SK-N-SH (cell line): ENCODE measurements at regions of chr6 and their contacts with region 1.

Region 1: DNA sequence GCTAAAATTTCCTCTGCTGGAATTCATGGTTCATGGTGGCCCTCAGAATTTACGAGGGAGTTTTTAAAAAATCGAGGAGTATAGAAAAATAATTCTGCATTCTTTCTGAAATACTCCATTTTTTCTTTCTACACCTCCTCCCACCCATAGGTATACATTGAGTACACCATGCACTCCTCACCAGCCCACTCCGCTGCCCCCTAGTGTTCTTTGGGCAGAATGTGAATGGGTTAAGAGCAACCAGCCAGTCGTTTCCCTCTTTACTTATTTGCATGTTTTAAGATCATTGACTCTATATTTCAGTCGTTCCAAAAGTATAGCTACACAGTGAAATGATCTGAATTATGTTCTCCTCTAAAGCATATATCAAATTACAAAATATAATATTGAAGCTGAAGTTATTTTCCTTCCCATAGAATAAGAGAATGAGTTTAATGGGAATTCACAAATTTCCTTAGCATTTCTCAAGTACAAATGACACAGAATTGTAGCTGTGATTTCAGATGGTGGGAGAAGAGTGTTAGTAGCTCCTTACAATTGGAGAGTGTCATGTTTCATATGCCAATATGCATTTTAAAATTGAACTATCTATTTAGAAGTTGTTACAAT is 977.7 kb upstream of the SLC35B3 start:
- DNase-seq: peak; percentile 35
- H3K4me3 ChIP-seq: no peak overlapping the region
- H3K27ac ChIP-seq: no peak overlapping the region
- H3K4me1 ChIP-seq: no peaks in the 10 kb centered on the region
- H3K27me3 ChIP-seq: no peaks in the 10 kb centered on the region
- CTCF ChIP-seq: peak; percentile 57
- EP300 ChIP-seq: no peak
- RAD21 ChIP-seq: peak; percentile 60

Region 2: GRCh38 chr6:9197726-9198125 is 215.3 kb before region 1 on chr6:
- CTCF ChIA-PET with region 1: no interaction called
- POLR2A ChIA-PET with region 1: no interaction called
- DNase-seq: no peak
- H3K4me3 ChIP-seq: no peak overlapping the region
- H3K27ac ChIP-seq: no peak overlapping the region
- H3K4me1 ChIP-seq: no peaks in the 10 kb centered on the region
- H3K27me3 ChIP-seq: no peaks in the 10 kb centered on the region
- CTCF ChIP-seq: no peak
- EP300 ChIP-seq: no peak
- RAD21 ChIP-seq: no peak

Region 3: GRCh38 chr6:9428421-9429172 is 15.5 kb after region 1 on chr6:
- CTCF ChIA-PET with region 1: interaction called, 10 read pairs
- POLR2A ChIA-PET with region 1: no interaction called
- DNase-seq: no peak
- H3K4me3 ChIP-seq: no peak overlapping the region
- H3K27ac ChIP-seq: no peak overlapping the region
- H3K4me1 ChIP-seq: no peaks in the 10 kb centered on the region
- H3K27me3 ChIP-seq: no peaks in the 10 kb centered on the region
- CTCF ChIP-seq: no peak
- EP300 ChIP-seq: no peak
- RAD21 ChIP-seq: no peak